PC-9 (cell line): ENCODE measurements at regions of chr4 and their contacts with region 1.

Region 1: DNA sequence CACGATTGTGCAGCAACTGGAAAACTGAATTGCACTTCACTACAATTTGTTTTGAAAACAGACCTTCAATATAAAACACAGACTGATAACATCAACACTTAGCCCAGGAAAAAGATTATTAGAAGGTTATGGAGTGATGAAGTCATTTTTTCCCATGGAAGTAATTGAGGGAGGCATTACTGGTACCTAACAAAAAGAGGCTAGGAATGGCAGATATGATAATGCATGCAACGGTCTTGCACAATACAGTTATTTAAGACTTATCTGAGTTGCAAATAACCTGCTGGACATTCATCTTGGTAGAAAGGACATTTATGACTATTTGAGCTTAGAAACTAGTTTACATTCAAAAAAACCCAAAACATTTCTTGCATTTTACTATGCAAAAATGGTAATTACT is 1031.9 kb downstream of the FAT4 start:
- DNase-seq: no peak
- H3K4me3 ChIP-seq: no peak overlapping the region
- H3K27ac ChIP-seq: no peak overlapping the region
- H3K4me1 ChIP-seq: no peaks in the 10 kb centered on the region
- H3K27me3 ChIP-seq: no peaks in the 10 kb centered on the region
- CTCF ChIP-seq: no peak

Region 2: GRCh38 chr4:124537971-124538370 is 1808.7 kb before region 1 on chr4:
- CTCF ChIA-PET with region 1: no interaction called
- POLR2A ChIA-PET with region 1: no interaction called
- intact Hi-C with region 1: no loop called
- DNase-seq: no peak
- H3K4me3 ChIP-seq: no peak overlapping the region
- H3K27ac ChIP-seq: no peak overlapping the region
- H3K4me1 ChIP-seq: no peaks in the 10 kb centered on the region
- H3K27me3 ChIP-seq: no peaks in the 10 kb centered on the region
- CTCF ChIP-seq: no peak

Region 3: GRCh38 chr4:126435491-126435890 is 88.8 kb after region 1 on chr4:
- CTCF ChIA-PET with region 1: no interaction called
- POLR2A ChIA-PET with region 1: interaction called, 18 read pairs
- intact Hi-C with region 1: no loop called
- DNase-seq: no peak
- H3K4me3 ChIP-seq: no peak overlapping the region
- H3K27ac ChIP-seq: no peak overlapping the region
- H3K4me1 ChIP-seq: no peaks in the 10 kb centered on the region
- H3K27me3 ChIP-seq: no peaks in the 10 kb centered on the region
- CTCF ChIP-seq: no peak